Upper lobe of right lung (tissue), 1 donor: ENCODE measurements at regions of chr18 and their contacts with region 1.

Region 1: DNA sequence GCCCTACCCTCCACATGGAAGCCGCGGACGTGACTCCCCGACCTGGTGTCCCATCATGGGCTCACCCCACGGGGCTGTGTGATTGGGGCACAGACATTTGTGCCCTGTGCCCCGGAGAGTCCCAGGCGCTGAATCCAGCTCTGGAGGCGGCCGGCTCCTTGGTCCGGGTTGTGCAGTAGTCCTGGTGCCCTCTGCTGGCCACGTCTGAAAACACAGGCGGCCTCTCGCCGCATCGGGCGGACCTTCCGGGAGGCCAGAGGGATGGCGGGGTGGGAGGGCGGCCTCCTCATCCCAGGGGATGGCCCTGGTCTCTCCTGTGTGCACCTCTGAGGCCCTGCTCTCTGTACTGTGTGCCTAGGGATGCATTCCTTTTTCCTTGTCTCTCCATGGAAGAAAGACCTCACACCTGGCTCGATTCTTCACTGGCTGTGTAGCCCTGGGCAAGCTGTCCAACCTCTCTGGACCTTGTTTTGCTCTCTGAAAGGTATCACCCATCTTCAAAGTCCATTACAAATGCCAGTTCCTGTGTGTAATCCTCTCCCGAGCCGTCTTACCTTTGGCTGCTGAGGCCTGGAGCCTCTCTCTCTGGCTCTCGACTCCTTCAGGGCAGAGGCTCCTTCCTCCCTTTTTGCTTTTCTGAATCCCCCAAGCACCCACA is 27.6 kb downstream of the CELF4 start:
- DNase-seq: peak; percentile 85
- ATAC-seq: peak; percentile 87
- H3K4me3 ChIP-seq: no peak overlapping the region
- H3K27ac ChIP-seq: no peak overlapping the region
- H3K4me1 ChIP-seq: no peaks in the 10 kb centered on the region
- H3K27me3 ChIP-seq: peaks cover 35% of the 10 kb centered on the region
- CTCF ChIP-seq: peak; percentile 85

Region 2: GRCh38 chr18:37346048-37346447 is 191.9 kb before region 1 on chr18:
- intact Hi-C with region 1: loop called (anchors 10 kb)
- DNase-seq: no peak
- ATAC-seq: no peak
- H3K4me3 ChIP-seq: no peak overlapping the region
- H3K27ac ChIP-seq: no peak overlapping the region
- H3K4me1 ChIP-seq: no peaks in the 10 kb centered on the region
- H3K27me3 ChIP-seq: no peaks in the 10 kb centered on the region
- CTCF ChIP-seq: no peak

Region 3: GRCh38 chr18:37385846-37386778 is 151.9 kb before region 1 on chr18:
- intact Hi-C with region 1: loop called (anchors 10 kb)
- DNase-seq: no peak
- ATAC-seq: no peak
- H3K4me3 ChIP-seq: no peak overlapping the region
- H3K27ac ChIP-seq: no peak overlapping the region
- H3K4me1 ChIP-seq: no peaks in the 10 kb centered on the region
- H3K27me3 ChIP-seq: no peaks in the 10 kb centered on the region
- CTCF ChIP-seq: peak; percentile 74